ENCODE measurements at regions of chr6 and their contacts with region 1.

Region 1: GRCh38 chr6:148805777-148806176 is 58.9 kb downstream of the UST start:
- DNase-seq: no peak
- H3K4me3 ChIP-seq: no peak overlapping the region
- CTCF ChIP-seq: no peak
- POLR2A ChIP-seq: no peak

Region 2: DNA sequence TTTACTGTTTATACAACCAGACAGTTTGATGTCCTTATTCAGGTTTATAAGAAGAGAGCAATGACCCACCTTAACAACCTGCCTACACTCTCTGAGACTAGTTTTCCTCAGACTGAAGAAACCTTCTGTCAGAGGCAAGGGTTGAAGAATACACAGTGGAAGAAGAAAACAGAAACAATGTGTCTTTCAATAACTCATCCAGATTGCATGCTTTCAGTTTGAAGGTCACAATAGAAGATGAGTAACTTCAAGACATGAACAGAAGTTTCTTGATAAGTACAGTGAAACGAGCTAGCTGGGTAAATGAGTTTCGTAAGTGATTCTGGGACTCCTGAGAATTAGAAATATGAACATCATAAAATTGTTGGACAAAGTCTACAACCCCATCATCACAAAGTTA is 1459.9 kb before region 1 on chr6:
- intact Hi-C with region 1: loop called (anchors 5 kb)
- DNase-seq: no peak
- H3K4me3 ChIP-seq: no peak overlapping the region
- CTCF ChIP-seq: no peak
- POLR2A ChIP-seq: no peak

Region 3: DNA sequence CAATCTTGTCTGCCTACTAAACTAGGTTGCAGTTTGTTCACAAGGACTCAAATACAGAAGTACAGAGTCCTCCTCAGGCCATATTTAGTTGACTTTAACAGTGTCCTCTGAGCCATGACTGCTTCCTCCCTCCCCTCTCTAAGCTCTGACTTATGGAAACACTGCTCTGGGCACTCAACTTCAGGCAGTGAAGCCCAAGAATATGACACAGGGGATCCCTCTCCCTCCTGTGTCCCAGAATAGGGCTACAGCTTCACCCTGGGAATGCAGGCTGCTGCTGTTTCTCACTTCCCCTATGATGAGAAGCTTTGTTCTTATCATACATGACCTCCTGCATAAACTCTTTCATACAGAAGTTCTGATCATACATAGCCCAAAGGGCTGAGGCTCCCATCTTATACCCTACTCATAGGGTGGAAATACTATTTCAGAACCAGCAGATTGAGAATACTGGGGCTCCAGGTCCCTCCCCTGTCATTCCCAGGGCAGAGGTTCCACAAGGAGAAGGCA is 156.3 kb before region 1 on chr6:
- intact Hi-C with region 1: no loop called
- DNase-seq: no peak
- H3K4me3 ChIP-seq: no peak overlapping the region
- CTCF ChIP-seq: no peak
- POLR2A ChIP-seq: no peak

Region 4: GRCh38 chr6:150409576-150410066 is 1603.8 kb after region 1 on chr6:
- intact Hi-C with region 1: no loop called
- DNase-seq: peak in 1 of 2 donors; percentile 59
- H3K4me3 ChIP-seq: no peak overlapping the region
- CTCF ChIP-seq: no peak
- POLR2A ChIP-seq: no peak